Activated CD4-positive, alpha-beta T cell treated with anti-CD3 and anti-CD28 coated beads, Interleukin-2, amount 10 ng/mL, durations not matched to agents 24 days and 14 days (primary cell): ENCODE measurements at regions of chr10 and their contacts with region 1.

Region 1: DNA sequence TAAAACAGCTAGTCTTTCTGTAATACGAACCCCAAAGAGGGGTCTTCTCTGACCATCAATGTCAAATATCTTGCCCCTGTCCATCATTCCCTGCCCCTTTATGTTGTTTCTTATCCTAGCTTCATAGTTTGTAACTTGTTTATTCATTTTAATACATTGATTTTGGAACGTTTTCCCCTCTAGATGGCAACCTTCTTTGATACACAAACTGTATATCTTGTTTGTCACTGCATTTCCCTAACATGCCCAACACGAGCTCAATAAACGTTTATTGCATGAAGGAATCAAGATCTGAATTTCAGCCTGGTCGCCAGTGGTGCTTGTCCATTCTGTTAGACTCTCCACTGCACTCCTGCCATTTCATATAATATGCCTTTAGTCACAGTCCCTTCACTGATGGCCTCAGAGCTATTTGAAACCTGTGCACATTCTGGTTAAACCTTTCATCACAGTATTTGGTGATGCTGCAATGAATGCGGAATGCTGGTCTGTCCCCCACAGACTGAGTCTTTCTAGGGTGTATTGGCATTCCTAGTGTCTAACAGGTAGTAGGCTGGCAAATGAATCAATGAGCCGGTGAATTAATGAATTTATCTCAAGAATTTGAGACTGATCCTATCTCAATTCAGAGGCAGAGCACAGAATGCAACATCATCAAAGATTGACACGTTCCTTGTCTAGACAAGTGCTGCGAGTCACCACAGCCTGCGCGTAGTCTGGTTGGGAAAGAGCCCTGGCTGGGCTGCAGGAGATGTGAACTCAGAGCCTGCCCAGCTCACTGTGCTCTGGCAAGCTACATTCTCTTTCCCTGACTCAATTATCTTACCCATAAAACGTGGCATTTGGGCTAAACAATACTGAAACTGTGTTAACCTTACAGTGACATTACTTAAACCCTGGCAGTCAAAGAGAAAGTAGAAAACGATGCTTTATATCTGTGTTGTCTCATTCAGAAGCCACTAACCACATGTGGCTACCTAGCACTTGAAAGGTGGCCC is 55.2 kb upstream of the FRMD4A start:
- DNase-seq: peak; percentile 59
- H3K4me3 Mint-ChIP-seq: no peak overlapping the region
- H3K27ac Mint-ChIP-seq: no peak overlapping the region
- H3K4me1 Mint-ChIP-seq: peaks cover 33% of the 10 kb centered on the region
- H3K27me3 Mint-ChIP-seq: peaks cover 33% of the 10 kb centered on the region

Region 2: DNA sequence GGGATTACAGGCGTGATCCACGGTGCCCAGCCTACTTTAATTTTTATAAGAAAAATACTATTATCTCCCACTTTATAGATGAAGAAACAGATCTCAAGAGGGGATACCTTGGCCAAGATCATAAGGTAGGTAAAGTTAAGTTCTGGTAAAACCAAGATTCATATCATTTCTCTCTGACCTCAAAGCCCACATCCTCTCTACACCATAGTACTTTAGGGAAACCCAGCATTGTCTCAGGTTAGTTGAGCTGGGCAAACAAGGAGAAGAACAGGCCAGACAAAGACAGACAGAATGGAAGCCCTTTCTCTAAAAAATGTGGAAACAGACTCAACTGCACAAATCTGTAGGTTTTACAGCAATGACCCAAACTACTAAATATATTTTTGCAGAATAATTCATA is 142.6 kb after region 1 on chr10:
- intact Hi-C with region 1: loop called (anchors 1 kb)
- DNase-seq: peak; percentile 79
- H3K4me3 Mint-ChIP-seq: peak overlapping the region; percentile 69
- H3K27ac Mint-ChIP-seq: peak overlapping the region; percentile 70
- H3K4me1 Mint-ChIP-seq: peaks cover 75% of the 10 kb centered on the region
- H3K27me3 Mint-ChIP-seq: no peaks in the 10 kb centered on the region

Region 3: DNA sequence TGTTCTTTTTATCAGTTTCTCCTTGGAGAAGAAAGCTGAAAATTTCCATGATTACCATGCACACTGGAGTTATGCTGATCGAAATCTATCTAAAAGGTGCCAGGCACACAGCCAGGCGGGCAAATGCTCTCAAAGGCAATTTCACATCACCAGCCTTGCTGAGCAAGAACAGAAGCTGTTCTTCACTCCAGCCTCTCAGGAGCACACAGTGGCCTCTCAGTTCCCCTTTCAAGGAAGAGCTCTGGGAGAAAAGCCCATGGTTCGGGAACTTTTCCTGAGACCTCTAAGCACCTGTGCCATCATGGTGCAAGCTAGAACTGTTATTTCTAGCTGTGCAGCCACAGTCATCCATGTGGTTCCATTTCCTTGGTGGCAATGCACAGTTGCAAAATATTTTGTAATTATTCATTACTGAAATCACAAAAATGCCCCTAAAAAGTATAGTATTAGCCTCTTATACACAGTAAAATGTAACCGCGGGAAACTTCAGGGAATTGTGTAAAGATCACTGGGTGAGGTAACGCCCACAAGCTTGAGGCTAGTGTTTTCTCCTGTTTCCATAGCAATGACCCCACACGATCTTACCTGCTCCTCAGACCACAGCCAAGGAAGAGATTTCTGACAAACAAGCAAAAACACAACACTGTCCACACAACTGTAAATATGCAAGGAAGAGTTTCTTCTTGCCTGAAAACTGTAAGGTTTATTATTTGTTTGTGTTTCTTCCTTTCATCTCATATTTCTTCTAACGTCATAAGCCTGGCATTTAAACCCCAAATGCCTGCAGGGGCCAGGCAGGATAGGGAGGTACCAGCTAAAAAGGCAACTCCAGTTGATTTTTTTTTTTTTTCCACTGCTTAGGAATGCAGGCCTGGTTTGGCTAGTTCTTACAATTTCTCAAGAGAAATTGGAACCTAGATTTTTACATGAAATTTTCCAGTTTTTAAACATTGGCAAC is 267.7 kb after region 1 on chr10:
- intact Hi-C with region 1: loop called (anchors 10 kb)
- DNase-seq: peak; percentile 75
- H3K4me3 Mint-ChIP-seq: peak overlapping the region; percentile 51
- H3K27ac Mint-ChIP-seq: peak overlapping the region; percentile 74
- H3K4me1 Mint-ChIP-seq: peaks cover 65% of the 10 kb centered on the region
- H3K27me3 Mint-ChIP-seq: no peaks in the 10 kb centered on the region